ENCODE measurements at regions of chr12 and their contacts with region 1.

Region 1: GRCh38 chr12:75994186-75994731 is 37.3 kb downstream of the PHLDA1 start:
- DNase-seq: no peak
- H3K4me3 ChIP-seq: no peak overlapping the region
- H3K27ac ChIP-seq: peak overlapping the region; percentile 27
- H3K4me1 ChIP-seq: peaks cover 40% of the 10 kb centered on the region
- H3K27me3 ChIP-seq: no peaks in the 10 kb centered on the region
- CTCF ChIP-seq: no peak

Region 2: GRCh38 chr12:75814851-75815754 is 179.2 kb before region 1 on chr12:
- CTCF ChIA-PET with region 1: no interaction called
- dilution Hi-C with region 1: no loop called
- in situ Hi-C with region 1: no loop called
- intact Hi-C with region 1: loop called (anchors 1 kb)
- DNase-seq: peak; percentile 66
- H3K4me3 ChIP-seq: no peak overlapping the region
- H3K27ac ChIP-seq: peak overlapping the region; percentile 60
- H3K4me1 ChIP-seq: peaks cover 23% of the 10 kb centered on the region
- H3K27me3 ChIP-seq: no peaks in the 10 kb centered on the region
- CTCF ChIP-seq: no peak